IMR-90 (cell line): ENCODE measurements at regions of chr1 and their contacts with region 1.

Region 1: DNA sequence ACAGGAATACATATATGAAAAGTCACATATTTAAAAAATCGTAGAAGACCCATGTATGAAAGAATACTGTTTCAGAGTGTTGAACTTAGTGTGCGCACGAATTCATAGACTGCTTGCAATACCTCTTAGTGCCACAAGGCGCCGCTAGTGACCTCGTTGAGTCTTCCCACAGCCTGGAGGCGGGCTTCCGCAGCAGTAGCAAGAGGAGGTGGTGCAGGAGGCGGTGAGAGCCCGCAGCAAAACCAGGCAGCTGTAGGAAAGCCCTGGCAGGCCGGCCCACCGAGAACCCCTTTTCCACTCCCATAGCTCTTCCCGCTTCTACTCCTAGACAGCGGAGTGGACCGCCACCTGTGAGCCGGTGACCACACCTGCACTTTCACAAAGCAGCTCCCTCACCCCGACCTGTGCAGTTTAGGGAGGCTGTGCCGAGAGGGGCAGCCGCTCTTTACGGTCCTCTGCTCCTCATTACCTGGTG is 23.5 kb downstream of the MTARC1 start:
- DNase-seq: peak; percentile 78
- ATAC-seq: peak; percentile 99
- H3K4me3 ChIP-seq: no peak overlapping the region
- H3K27ac ChIP-seq: no peak overlapping the region
- H3K4me1 ChIP-seq: peaks cover under 1% of the 10 kb centered on the region; the same call in 1 of the 2 replicates
- H3K27me3 ChIP-seq: peaks cover 6% of the 10 kb centered on the region; the same call in 1 of the 2 replicates
- CTCF ChIP-seq: peak; percentile 91
- POLR2A ChIP-seq: no peak
- RAD21 ChIP-seq: peak; percentile 78

Region 2: GRCh38 chr1:220908757-220909156 is 98.5 kb after region 1 on chr1:
- CTCF ChIA-PET with region 1: no interaction called
- POLR2A ChIA-PET with region 1: no interaction called
- dilution Hi-C with region 1: no loop called
- in situ Hi-C with region 1: no loop called
- intact Hi-C with region 1: loop called (anchors 1 kb)
- DNase-seq: peak; percentile 44
- ATAC-seq: 0 out of 2 replicates have a peak, but pooled peaks have one; percentile 29
- H3K4me3 ChIP-seq: no peak overlapping the region
- H3K27ac ChIP-seq: no peak overlapping the region
- H3K4me1 ChIP-seq: no peaks in the 10 kb centered on the region
- H3K27me3 ChIP-seq: peaks cover 2% of the 10 kb centered on the region; the same call in 1 of the 2 replicates
- CTCF ChIP-seq: peak; percentile 60
- POLR2A ChIP-seq: no peak
- RAD21 ChIP-seq: peak; percentile 75

Region 3: DNA sequence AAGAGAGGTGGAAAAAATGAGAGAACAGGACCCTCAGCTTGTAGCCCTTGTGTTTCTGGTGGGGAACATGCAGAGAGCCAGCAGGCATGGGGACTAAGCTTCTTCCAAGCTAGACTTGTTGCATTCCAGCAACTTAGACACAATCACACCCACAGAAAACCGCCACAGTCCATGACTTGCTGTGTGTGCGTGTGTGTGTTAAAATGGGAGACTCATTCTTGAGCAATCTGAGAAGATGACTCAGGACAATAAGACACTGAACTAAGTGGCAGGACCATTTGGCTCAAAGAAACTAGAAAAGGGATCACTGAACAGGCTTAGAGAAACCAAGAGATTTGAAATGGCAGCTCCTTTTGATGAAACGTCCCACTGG is 147.0 kb after region 1 on chr1:
- CTCF ChIA-PET with region 1: no interaction called
- POLR2A ChIA-PET with region 1: no interaction called
- dilution Hi-C with region 1: no loop called
- in situ Hi-C with region 1: no loop called
- intact Hi-C with region 1: loop called (anchors 10 kb)
- DNase-seq: peak; percentile 98
- ATAC-seq: peak; percentile 87
- H3K4me3 ChIP-seq: no peak overlapping the region
- H3K27ac ChIP-seq: peak overlapping the region; percentile 1; the same call in 1 of the 2 replicates
- H3K4me1 ChIP-seq: peaks cover 4% of the 10 kb centered on the region
- H3K27me3 ChIP-seq: no peaks in the 10 kb centered on the region
- CTCF ChIP-seq: no peak
- POLR2A ChIP-seq: no peak
- RAD21 ChIP-seq: peak; percentile 22; the same call in 1 of the 2 replicates

Region 4: DNA sequence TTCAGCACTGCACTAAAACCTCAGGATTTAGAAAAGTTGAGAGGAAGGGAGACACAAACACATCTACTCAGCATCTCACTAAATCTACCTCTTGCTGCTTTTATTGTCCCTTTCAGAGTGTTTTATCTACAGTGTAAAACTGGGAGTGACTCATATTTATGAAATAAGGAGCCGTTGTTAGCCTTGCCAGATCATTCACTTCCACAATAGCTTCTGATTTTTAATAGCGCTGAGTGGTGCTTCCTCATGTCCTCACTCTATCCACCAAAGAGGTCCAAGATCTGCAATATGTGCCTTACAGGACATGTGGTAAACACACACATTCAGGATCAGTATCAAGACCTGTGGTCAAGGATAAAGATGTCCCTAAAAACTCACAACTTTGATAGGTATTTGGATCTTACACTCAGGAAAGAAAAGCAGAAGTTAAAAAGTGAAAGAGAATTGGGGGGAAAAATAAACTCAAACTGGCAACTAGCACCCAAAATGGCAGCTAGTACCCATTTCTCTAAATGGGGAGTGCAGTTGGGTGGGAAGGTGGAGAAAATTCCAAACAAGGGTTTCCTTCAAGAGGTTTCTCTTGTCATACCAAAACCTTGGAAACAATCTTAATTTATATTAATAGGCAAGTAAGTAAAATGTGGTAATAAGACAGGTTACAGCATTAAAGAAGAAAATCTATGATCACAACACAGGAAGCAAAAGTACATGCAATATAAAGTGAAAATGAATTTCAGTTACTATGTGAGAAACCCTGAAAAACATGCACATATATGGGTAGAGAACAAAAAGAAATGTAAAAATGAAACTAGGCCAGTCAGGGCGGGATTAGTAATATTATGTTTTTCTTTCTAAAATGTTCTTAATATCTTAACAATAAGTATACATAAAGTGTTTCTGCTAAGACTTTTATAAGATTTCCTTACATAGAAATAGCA is 915.8 kb after region 1 on chr1:
- CTCF ChIA-PET with region 1: no interaction called
- POLR2A ChIA-PET with region 1: no interaction called
- dilution Hi-C with region 1: no loop called
- in situ Hi-C with region 1: no loop called
- intact Hi-C with region 1: loop called (anchors 10 kb)
- DNase-seq: peak; percentile 60
- ATAC-seq: no peak
- H3K4me3 ChIP-seq: no peak overlapping the region
- H3K27ac ChIP-seq: peak overlapping the region; percentile 56; the same call in 1 of the 2 replicates
- H3K4me1 ChIP-seq: peaks cover 46% of the 10 kb centered on the region
- H3K27me3 ChIP-seq: no peaks in the 10 kb centered on the region
- CTCF ChIP-seq: no peak
- POLR2A ChIP-seq: no peak
- RAD21 ChIP-seq: no peak